ENCODE measurements at regions of chr10 and their contacts with region 1.

Region 1: DNA sequence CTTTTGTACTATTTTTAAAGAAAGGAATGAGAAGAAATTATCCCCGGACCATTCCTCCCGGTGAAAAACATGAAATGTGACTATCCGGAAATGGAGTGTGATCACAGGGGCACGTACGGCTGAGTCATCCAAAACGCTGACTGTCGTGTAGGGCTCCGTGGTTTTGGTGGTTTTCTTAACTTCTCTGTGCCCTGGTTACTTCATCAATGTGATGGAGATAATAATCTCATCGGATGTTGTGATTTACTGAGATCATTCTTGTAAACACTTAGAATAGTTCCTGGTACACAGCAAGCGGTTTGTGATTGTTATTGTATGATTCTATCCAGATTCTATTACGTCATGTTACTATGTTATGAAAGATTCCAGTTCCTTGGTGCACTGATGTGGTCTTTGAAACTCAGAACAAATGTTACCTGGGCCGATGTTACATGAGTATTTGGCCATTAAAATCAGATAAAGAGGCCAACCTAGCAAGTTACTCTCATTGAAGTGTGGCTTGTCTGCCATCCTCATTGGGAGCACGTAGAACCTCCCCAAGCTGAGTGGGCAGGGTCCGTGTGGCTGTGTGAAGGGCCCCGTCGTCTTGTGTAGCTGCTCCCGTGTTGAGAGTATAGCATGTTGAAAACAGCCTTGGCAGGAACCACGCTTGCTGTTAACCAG is 99.5 kb downstream of the CAMK1D start:
- DNase-seq: peak; percentile 94
- H3K4me3 Mint-ChIP-seq: peak overlapping the region; percentile 74
- H3K27ac Mint-ChIP-seq: peak overlapping the region; percentile 88
- H3K4me1 Mint-ChIP-seq: peaks cover 27% of the 10 kb centered on the region
- H3K27me3 Mint-ChIP-seq: peaks cover 36% of the 10 kb centered on the region

Region 2: GRCh38 chr10:12264204-12264940 is 184.5 kb before region 1 on chr10:
- intact Hi-C with region 1: loop called (anchors 1 kb)
- DNase-seq: peak; percentile 89
- H3K4me3 Mint-ChIP-seq: peak overlapping the region; percentile 69
- H3K27ac Mint-ChIP-seq: peak overlapping the region; percentile 77
- H3K4me1 Mint-ChIP-seq: peaks cover 19% of the 10 kb centered on the region
- H3K27me3 Mint-ChIP-seq: no peaks in the 10 kb centered on the region

Region 3: GRCh38 chr10:12369982-12370381 is 78.9 kb before region 1 on chr10:
- intact Hi-C with region 1: loop called (anchors 2 kb)
- DNase-seq: no peak
- H3K4me3 Mint-ChIP-seq: no peak overlapping the region
- H3K27ac Mint-ChIP-seq: no peak overlapping the region
- H3K4me1 Mint-ChIP-seq: peaks cover 17% of the 10 kb centered on the region
- H3K27me3 Mint-ChIP-seq: no peaks in the 10 kb centered on the region

Region 4: GRCh38 chr10:12419262-12419847 is 29.5 kb before region 1 on chr10:
- intact Hi-C with region 1: loop called (anchors 2 kb)
- DNase-seq: peak; percentile 78
- H3K4me3 Mint-ChIP-seq: no peak overlapping the region
- H3K27ac Mint-ChIP-seq: peak overlapping the region; percentile 58
- H3K4me1 Mint-ChIP-seq: peaks cover 12% of the 10 kb centered on the region
- H3K27me3 Mint-ChIP-seq: peaks cover 2% of the 10 kb centered on the region

Region 5: GRCh38 chr10:12644380-12645144 is 195.7 kb after region 1 on chr10:
- intact Hi-C with region 1: loop called (anchors 2 kb)
- DNase-seq: no peak
- H3K4me3 Mint-ChIP-seq: peak overlapping the region; percentile 27
- H3K27ac Mint-ChIP-seq: peak overlapping the region; percentile 83
- H3K4me1 Mint-ChIP-seq: peaks cover 25% of the 10 kb centered on the region
- H3K27me3 Mint-ChIP-seq: no peaks in the 10 kb centered on the region